GM10248 (cell line): ENCODE measurements at regions of chr1 and their contacts with region 1.

Region 1: DNA sequence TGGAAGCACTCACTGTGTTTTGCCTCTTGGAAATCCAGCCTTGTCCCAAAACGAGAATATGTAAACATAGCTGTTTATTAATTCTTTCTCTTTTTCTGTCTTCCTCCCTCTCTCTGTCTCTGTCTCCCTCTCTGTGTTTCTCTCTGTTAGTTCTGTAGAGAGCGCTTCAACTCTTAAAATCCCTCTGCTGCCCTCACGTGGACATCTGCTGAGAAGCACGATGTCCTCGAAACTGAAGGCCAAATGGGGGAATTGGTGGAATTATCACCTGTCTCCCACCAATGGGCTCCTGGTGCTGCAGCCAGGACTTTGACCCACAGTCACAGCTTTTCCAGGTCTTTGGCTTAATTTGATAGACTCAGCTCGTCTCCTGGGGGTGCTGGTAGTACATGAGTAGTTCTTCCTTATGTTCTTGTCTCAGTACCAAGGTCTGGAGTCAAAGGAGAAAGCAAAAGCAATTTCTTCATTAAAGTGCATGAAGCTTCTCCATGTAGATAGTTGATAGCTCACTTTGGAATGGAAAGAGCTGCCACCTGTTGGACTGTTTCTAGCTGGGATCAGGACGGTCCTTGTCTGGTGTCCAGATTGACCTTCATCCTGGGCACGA is 5.5 kb upstream of the GBP6 start:
- DNase-seq: peak; percentile 51
- CTCF ChIP-seq: peak; percentile 86

Region 2: GRCh38 chr1:89369331-89369730 is 10.9 kb after region 1 on chr1:
- CTCF ChIA-PET with region 1: interaction called, 15 read pairs
- POLR2A ChIA-PET with region 1: no interaction called
- DNase-seq: no peak
- CTCF ChIP-seq: no peak